SK-MEL-5 (cell line): ENCODE measurements at regions of chr1 and their contacts with region 1.

Region 1: DNA sequence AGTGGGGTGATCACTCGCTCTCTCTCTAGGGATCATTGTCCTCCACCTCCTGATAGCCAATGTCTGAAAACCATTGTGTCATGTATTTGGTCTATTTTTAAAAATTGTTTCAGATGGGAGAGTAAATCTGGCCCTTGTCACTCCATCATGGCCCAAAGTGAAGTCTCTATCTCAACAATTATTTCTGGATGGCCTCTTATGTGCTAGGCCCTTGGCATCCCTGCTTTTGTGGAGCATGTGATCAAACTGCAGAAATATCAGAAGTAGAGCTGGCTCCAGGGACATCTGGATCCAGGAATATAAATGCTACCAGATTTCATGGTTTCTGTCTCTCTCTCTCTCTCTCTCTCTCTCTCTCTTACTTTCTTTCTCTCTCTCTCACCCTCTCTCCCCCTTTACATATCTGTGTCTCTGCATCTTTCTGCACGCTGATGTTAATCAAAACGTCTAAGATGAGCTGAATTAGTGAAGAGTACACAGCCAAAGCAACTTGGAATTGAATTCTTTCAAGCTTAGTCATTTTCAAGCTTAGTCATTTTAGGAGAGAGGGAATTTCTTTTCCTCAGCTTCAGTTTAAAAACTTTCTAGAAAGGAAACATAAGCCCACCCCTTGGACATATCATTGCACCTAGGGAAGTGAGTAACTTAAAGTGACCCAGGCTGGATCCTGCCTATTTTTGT is 47.4 kb upstream of the DOCK7 start:
- DNase-seq: no peak

Region 2: DNA sequence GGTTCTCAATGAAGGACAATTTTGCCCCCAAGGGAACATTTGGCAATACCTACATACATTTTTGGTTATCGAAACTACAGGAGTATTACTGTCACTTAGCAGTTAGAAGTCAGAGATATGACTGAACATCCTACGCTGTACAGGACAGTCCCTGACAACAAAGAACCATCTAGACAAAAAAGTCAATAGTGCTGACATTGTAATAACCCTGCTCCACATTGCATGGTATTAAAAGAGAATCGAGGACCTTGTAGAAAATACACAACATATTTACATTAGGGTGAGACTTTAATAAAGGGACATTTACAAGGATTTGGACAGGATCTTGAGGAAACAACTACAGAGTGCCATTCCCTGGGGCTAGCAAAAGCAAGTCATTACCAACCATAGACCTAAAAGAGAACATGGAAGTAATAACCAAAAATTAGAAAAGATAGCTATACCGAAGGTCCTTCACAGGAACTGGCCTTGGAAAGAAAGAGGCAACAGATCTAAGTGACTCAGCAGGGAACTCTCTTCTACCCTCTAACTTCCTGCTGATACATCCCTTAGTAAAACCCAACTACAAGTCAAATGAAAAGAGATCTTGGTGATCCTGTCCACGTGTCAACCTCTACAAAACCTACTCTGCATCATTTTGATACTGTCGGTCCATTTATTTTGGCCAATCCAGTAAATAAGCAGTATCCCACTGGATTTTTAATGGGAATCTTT is 98.1 kb before region 1 on chr1:
- in situ Hi-C with region 1: loop called (anchors 10 kb)
- DNase-seq: no peak